Astrocyte of the cerebellum (primary cell): ENCODE measurements at regions of chr11 and their contacts with region 1.

Region 1: DNA sequence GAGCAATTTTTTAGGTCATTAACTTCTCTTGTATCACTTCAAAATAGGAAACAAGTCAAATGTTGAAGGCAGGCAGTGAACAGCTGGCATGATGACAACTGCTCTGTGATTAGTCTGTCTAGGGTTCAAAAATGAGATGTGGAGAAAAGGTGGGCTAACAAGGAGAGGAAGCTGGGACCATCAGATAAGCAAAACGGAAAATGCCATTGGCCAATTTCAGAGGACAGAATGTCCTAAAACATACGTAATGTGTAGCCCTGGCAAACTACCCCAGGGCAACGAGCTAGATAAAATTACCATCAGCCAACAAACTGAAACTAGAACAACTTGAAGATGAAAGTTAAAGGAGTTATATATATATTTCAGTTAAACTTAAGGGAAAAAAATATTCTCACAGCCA is 93.2 kb downstream of the RELT start:
- DNase-seq: no peak
- H3K4me3 ChIP-seq: no peak overlapping the region
- CTCF ChIP-seq: no peak

Region 2: GRCh38 chr11:73507086-73507485 is 37.7 kb after region 1 on chr11:
- in situ Hi-C with region 1: no loop called
- DNase-seq: no peak
- H3K4me3 ChIP-seq: no peak overlapping the region
- CTCF ChIP-seq: no peak

Region 3: DNA sequence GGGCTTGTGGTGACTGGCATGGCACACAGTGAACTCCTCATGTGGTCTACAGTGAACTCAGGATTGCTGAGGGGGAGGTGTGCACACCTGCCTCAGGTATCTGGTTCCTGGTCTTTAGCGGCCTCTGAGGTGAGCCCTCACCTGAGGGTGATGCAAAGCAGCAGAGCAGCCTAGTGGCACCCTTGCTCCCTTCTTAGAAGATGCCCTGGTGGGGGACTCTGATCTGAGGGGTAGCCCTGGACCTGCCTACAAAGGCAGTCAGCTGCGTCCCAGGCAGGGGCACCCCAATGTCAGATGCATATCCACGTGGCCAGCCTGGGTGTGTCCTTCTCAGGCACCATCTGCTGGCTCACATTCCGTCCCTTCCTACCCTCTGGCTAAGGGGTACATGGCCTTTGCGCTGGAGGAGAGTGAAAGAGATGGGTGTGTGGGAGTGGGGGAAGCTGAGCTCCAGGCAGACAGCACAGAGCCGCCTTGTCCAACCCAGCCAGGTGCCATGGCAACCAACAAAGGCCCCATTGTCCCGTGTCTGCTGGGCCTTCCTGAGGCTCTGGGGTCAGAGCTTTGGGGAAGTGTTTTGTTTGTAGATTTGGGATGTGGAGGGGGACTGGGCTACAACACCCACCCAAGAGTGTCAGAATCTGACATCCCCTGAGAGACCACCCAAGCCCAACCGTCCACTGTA is 182.8 kb after region 1 on chr11:
- in situ Hi-C with region 1: loop called (anchors 5 kb)
- DNase-seq: no peak
- H3K4me3 ChIP-seq: no peak overlapping the region
- CTCF ChIP-seq: no peak